Activated CD4-positive, alpha-beta memory T cell treated with anti-CD3 and anti-CD28 coated beads, Interleukin-2, amount 10 ng/mL, durations not matched to agents 7 days and 5 days (primary cell): ENCODE measurements at regions of chr1 and their contacts with region 1.

Region 1: GRCh38 chr1:26500488-26501175 is 28.4 kb downstream of the HMGN2 start:
- DNase-seq: no peak
- H3K4me3 Mint-ChIP-seq: peak overlapping the region; percentile 87
- H3K27ac Mint-ChIP-seq: peak overlapping the region; percentile 93
- H3K4me1 Mint-ChIP-seq: peaks cover 28% of the 10 kb centered on the region
- H3K27me3 Mint-ChIP-seq: no peaks in the 10 kb centered on the region

Region 2: GRCh38 chr1:26218906-26219494 is 281.6 kb before region 1 on chr1:
- CTCF ChIA-PET with region 1: no interaction called
- POLR2A ChIA-PET with region 1: no interaction called
- DNase-seq: no peak
- H3K4me3 Mint-ChIP-seq: no peak overlapping the region
- H3K27ac Mint-ChIP-seq: no peak overlapping the region
- H3K4me1 Mint-ChIP-seq: no peaks in the 10 kb centered on the region
- H3K27me3 Mint-ChIP-seq: peaks cover 15% of the 10 kb centered on the region

Region 3: DNA sequence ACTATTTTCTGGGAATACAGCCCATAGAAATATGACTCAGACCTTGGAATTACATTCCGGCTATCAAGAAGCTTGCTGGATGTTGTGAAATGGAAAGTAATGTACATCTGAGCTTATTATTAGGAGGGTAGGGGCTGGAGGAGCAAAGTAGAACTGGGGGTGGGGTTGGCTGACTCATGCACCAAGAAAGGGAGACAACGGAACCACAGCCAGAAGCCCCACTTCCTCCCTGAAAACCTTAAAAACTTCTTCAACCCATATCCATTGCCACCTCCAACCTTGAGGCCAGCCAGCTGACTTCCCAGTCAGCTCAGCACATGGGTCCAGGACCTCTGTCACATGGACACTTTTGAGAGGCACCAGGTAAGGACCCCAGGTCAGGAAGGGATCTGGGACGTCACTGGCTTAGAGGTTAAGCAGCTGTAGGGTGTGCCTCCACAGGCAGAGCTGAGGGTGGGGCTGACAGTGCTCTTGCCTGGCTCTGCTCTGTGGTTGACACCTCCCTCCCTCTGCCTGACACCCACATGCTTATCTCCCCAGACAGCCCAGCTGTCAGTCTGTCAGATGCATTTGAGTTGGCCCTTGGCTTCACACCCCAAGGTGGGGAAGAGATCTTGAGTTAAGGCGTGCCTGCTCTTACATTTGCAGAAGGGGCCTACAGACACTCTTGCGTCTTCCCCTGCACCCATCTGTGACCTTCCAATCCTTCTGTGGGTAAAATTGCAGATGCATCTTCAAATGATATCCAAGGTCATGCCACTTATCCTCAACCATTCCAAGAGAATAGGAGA is 122.3 kb before region 1 on chr1:
- CTCF ChIA-PET with region 1: no interaction called
- POLR2A ChIA-PET with region 1: no interaction called
- DNase-seq: peak; percentile 89
- H3K4me3 Mint-ChIP-seq: peak overlapping the region; percentile 52
- H3K27ac Mint-ChIP-seq: peak overlapping the region; percentile 91
- H3K4me1 Mint-ChIP-seq: peaks cover 75% of the 10 kb centered on the region
- H3K27me3 Mint-ChIP-seq: no peaks in the 10 kb centered on the region

Region 4: GRCh38 chr1:26472901-26473845 is 27.5 kb before region 1 on chr1:
- CTCF ChIA-PET with region 1: interaction called, 10 read pairs
- POLR2A ChIA-PET with region 1: interaction called, 51 read pairs
- DNase-seq: peak; percentile 97
- H3K4me3 Mint-ChIP-seq: peak overlapping the region; percentile 90
- H3K27ac Mint-ChIP-seq: peak overlapping the region; percentile 66
- H3K4me1 Mint-ChIP-seq: peaks cover 52% of the 10 kb centered on the region
- H3K27me3 Mint-ChIP-seq: no peaks in the 10 kb centered on the region

Region 5: GRCh38 chr1:26529655-26530409 is 29.2 kb after region 1 on chr1 and contains the start of gene RPS6KA1:
- CTCF ChIA-PET with region 1: interaction called, 20 read pairs
- POLR2A ChIA-PET with region 1: interaction called, 36 read pairs
- DNase-seq: peak; percentile 71
- H3K4me3 Mint-ChIP-seq: peak within 1 kb of the TSS; percentile 84
- H3K27ac Mint-ChIP-seq: peak within 1 kb of the TSS; percentile 80
- H3K4me1 Mint-ChIP-seq: peaks cover 43% of the 10 kb centered on the region
- H3K27me3 Mint-ChIP-seq: peaks cover 5% of the 10 kb centered on the region
- total RNA-seq, gene RPS6KA1: 170 to 175 TPM

Region 6: DNA sequence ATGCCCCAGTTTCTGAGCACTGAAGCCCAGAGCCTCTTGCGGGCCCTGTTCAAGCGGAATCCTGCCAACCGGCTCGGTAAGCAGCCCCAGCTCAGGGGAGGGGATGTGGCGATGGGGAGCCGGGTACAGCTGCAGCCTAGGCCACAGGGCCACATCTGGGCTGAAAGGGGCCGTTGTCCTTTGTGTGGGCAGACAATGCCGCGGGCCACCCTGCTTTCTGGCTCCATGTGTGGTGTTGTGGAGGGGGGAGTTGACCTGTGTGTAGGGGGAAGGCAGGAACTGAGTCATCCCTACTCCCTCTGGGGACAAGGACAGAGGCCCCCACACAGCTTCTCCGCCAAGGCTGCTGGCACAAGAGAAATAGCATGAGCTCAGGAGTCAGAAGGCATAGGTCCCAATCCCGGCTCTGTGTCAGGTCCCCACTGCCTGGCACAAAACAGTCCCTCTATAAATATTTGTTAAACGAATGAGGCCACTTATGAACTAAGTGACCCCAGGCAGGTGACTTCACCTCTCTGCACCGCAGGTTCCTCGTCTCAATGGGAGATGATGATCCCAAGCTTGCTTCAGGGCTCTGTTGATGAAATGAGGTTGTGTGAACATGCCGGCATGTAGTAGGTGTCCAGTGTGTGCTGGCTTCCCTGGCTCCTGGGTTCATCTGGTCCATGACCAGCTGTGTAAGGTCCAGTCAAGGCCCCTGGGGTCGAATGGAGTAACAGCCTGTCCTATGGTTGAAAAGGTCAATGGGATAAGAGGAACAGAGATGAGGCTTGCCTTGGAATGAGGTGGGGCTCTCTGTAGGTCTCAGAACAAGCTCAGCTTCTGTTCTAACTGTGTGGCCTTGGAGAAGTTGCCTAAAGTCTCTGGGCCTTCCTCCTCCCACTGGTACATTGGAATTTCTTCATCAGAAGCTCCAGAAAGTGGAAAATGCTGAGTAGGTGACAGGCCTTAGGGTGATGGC is 55.2 kb after region 1 on chr1:
- CTCF ChIA-PET with region 1: interaction called, 15 read pairs
- POLR2A ChIA-PET with region 1: interaction called, 38 read pairs
- DNase-seq: no peak
- H3K4me3 Mint-ChIP-seq: no peak overlapping the region
- H3K27ac Mint-ChIP-seq: peak overlapping the region; percentile 55
- H3K4me1 Mint-ChIP-seq: peaks cover 45% of the 10 kb centered on the region
- H3K27me3 Mint-ChIP-seq: no peaks in the 10 kb centered on the region

Region 7: DNA sequence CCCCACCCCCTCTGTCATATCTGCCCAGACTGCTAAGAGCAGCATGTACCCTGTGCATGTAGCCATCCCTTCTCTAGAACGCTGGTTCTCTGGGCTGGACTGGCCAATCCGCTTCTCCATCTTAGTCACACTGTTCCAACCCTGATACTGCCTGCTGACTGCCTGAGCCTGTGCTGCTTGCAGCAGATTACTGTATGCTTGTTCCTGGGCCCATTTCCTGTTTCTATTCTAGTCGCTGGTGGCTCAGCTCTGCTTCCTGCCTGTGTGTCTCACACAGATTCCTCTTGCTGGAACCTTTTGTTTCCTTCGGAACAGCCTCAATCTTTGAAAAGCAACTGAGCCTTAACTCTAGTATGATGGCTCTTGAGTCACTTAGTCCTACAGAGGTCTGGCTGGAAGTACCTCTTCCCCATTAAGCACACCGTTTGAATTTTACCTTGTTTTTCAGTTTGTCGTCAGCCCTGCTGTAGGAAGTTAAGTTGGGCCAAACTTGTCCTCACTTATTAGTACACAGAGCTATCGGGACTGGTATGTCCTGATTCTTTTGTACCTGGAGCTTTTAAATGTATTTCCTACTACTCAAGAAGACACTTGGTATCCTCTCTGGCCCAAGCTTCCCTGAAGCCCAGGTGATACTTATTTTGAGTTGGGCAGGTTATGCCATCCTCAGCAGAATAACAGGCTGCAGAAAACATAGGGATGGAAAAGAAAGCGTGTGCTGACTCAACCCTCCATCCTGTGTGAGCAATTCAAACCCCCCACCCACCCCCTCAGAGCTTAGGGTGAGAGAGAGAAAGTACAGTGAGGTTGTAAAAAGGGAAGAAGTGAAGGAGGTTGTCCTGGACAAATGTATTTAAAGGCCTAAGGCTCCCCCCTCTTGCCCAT is 243.7 kb after region 1 on chr1:
- CTCF ChIA-PET with region 1: no interaction called
- POLR2A ChIA-PET with region 1: interaction called, 10 read pairs
- DNase-seq: peak; percentile 90
- H3K4me3 Mint-ChIP-seq: peak overlapping the region; percentile 51
- H3K27ac Mint-ChIP-seq: peak overlapping the region; percentile 91
- H3K4me1 Mint-ChIP-seq: peaks cover 77% of the 10 kb centered on the region
- H3K27me3 Mint-ChIP-seq: no peaks in the 10 kb centered on the region